ENCODE measurements at regions of chr3 and their contacts with region 1.

Region 1: DNA sequence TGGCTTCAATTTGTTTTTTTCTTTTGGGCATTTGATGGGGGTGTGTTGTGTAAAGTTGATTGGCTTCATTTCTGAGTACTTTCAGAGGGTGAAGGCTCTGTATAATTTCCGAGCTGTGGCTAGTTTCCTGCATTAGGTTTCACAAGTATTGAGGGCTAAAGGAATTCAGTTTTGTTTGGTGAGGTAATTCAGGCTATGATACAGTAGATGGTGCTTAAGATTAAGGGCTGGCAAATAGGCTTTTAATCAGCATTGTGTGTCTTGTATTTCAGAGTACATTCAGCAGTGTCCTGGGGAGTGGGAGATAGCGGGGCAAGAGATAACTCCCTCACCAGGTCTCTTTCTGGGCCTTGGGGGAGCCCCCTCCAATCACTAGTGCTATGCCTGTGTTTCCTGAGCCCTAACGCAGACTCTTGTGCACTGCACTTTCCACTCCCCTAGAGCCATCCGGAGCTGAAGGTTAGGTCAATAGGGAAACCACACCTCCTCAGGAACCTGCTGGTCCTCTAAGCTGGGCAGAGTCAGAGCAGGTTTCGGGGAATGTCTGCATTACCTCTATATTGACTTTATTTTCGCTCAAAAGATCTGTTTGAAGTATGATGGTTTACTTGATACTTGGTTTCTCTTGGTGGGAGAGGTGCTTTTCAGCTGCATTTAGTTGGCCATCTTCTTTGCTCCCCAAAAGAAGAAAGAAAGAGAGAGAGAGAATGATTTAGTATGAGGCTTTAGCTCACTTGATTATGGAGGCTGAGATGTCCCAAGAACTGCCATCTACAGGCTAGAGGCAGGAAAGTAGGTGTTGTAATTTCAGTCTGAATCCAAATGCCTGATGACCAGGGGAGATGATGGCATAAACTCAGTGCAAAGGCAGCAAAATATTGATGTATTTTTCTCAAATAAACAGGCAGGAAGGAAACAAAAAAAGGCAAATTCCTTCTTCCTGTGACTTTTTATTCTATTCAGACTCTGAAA is 617.0 kb upstream of the ROBO1 start:
- DNase-seq: no peak
- H3K4me3 ChIP-seq: no peak overlapping the region
- H3K27ac ChIP-seq: no peak overlapping the region
- H3K4me1 ChIP-seq: no peaks in the 10 kb centered on the region
- H3K27me3 ChIP-seq: no peaks in the 10 kb centered on the region
- CTCF ChIP-seq: no peak

Region 2: DNA sequence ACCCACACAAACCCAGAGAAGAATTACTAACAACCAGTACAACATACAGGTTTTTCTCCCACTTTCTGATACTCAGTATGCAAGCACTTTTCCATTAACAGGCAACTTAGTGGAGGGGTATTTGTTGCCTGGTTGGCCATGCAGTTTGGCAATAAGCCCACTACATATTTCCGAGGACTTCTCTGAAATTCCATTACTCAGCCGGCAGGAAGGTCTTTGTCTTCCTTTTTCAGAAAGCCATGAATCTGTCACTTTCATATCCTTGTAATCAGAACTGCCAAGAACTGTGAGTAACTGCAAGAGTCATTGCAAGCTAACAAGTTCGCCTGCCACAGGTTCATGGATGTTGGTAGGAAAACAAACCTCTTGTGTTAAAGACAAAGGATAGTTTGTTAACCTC is 194.8 kb before region 1 on chr3:
- CTCF ChIA-PET with region 1: no interaction called
- POLR2A ChIA-PET with region 1: interaction called, 11 read pairs
- intact Hi-C with region 1: no loop called
- DNase-seq: peak; percentile 43 to 66
- H3K4me3 ChIP-seq: no peak overlapping the region
- H3K27ac ChIP-seq: 0 out of 2 replicates have a peak overlapping the region, but pooled peaks have one; percentile 1
- H3K4me1 ChIP-seq: peaks cover 17% of the 10 kb centered on the region
- H3K27me3 ChIP-seq: no peaks in the 10 kb centered on the region
- CTCF ChIP-seq: no peak